GM10248 (cell line): ENCODE measurements at regions of chr5 and their contacts with region 1.

Region 1: GRCh38 chr5:118956727-118957126 is 31.6 kb downstream of the DTWD2 start:
- DNase-seq: no peak
- CTCF ChIP-seq: peak; percentile 34

Region 2: DNA sequence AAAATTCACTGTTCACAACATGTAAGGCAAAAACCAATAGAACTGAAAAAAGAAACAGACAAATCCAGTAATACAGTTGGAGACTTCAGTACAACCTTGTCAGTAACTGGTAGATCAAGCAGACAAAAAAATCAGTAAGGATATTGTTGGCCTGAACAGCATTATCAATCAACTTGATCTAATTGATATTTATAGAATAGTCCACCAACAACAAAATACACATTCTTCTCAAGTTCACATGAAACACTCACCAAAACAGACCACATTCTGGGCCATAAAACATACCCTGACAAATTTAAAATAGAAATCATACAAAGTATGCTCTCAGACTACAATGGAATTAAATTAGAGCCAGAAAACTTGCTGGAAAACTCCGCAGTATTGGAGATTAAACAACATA is 25.2 kb before region 1 on chr5:
- CTCF ChIA-PET with region 1: no interaction called
- POLR2A ChIA-PET with region 1: no interaction called
- DNase-seq: no peak
- CTCF ChIP-seq: no peak

Region 3: GRCh38 chr5:118946138-118946800 is 10.5 kb before region 1 on chr5:
- CTCF ChIA-PET with region 1: interaction called, 10 read pairs
- POLR2A ChIA-PET with region 1: no interaction called
- DNase-seq: no peak
- CTCF ChIP-seq: no peak